H1 (cell line): ENCODE measurements at regions of chr5 and their contacts with region 1.

Region 1: GRCh38 chr5:160082614-160083500 is 36.4 kb downstream of the PWWP2A start:
- DNase-seq: no peak
- H3K4me3 ChIP-seq: no peak overlapping the region
- H3K27ac ChIP-seq: 0 out of 2 replicates have a peak overlapping the region, but pooled peaks have one; percentile 11
- H3K4me1 ChIP-seq: peaks cover 0 to 10% (median 0%) of the 10 kb centered on the region in 4 experiments; a peak in 2 of 7 replicates
- H3K27me3 ChIP-seq: no peaks in the 10 kb centered on the region
- CTCF ChIP-seq: no peak
- EP300 ChIP-seq: no peak
- POLR2A ChIP-seq: no peak
- RAD21 ChIP-seq: no peak

Region 2: DNA sequence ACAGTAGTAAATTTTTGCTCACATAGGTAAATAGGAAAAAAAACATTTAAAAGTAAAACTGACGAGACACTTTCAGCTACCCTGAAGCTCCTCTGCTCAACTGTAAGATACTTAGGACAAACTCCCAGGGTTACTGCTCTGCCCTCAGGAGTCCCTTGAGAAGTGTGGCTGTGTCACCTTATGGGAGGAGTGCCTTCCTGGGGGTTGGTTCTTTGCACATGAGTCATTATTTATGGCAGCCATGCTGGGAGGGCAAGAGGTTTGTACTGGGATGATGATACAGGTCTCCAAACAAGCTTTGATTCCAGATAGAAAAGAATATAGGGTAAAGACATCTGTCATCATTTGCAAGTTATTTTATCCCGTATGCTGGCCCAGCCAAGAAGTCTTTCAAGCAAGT is 28.0 kb before region 1 on chr5:
- CTCF ChIA-PET with region 1: interaction called, 13 read pairs
- POLR2A ChIA-PET with region 1: interaction called, 5 read pairs
- DNase-seq: no peak
- H3K4me3 ChIP-seq: no peak overlapping the region
- H3K27ac ChIP-seq: no peak overlapping the region
- H3K4me1 ChIP-seq: no peaks in the 10 kb centered on the region
- H3K27me3 ChIP-seq: no peaks in the 10 kb centered on the region
- CTCF ChIP-seq: no peak
- EP300 ChIP-seq: no peak
- POLR2A ChIP-seq: no peak
- RAD21 ChIP-seq: no peak

Region 3: DNA sequence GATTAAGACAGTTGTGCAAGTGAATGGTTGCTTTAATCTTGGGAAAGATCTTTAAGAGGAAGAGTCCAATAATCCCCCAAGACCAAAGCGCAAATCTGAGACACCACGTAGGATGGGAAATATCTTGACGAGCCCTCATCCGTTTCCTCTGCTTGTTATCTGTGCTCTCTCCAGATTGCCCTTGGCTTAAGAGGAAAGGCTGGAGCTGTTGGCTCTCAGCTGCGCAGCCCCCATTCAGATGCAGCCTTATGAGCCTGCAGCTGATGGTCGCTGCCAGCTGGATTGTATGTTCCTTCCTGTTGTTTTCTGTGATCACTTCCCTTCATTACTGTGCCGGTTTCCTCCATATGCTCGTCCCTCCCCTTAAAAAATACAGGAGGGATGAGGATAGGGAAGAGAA is 11.3 kb before region 1 on chr5:
- CTCF ChIA-PET with region 1: interaction called, 52 read pairs
- POLR2A ChIA-PET with region 1: interaction called, 9 read pairs
- DNase-seq: no peak
- H3K4me3 ChIP-seq: no peak overlapping the region
- H3K27ac ChIP-seq: no peak overlapping the region
- H3K4me1 ChIP-seq: peaks cover 0 to 4% (median 0%) of the 10 kb centered on the region in 4 experiments; a peak in 3 of 7 replicates
- H3K27me3 ChIP-seq: no peaks in the 10 kb centered on the region
- CTCF ChIP-seq: no peak
- EP300 ChIP-seq: no peak
- POLR2A ChIP-seq: no peak
- RAD21 ChIP-seq: no peak

Region 4: GRCh38 chr5:160092960-160093707 is 10.3 kb after region 1 on chr5:
- CTCF ChIA-PET with region 1: interaction called, 16 read pairs
- POLR2A ChIA-PET with region 1: interaction called, 9 read pairs
- DNase-seq: no peak
- H3K4me3 ChIP-seq: no peak overlapping the region
- H3K27ac ChIP-seq: no peak overlapping the region
- H3K4me1 ChIP-seq: no peaks in the 10 kb centered on the region
- H3K27me3 ChIP-seq: no peaks in the 10 kb centered on the region
- CTCF ChIP-seq: no peak
- EP300 ChIP-seq: no peak
- POLR2A ChIP-seq: no peak
- RAD21 ChIP-seq: no peak

Region 5: GRCh38 chr5:160105686-160106360 is 23.0 kb after region 1 on chr5:
- CTCF ChIA-PET with region 1: interaction called, 11 read pairs
- POLR2A ChIA-PET with region 1: interaction called, 3 read pairs
- DNase-seq: no peak
- H3K4me3 ChIP-seq: no peak overlapping the region
- H3K27ac ChIP-seq: no peak overlapping the region
- H3K4me1 ChIP-seq: no peaks in the 10 kb centered on the region; a peak in 1 of 7 replicates
- H3K27me3 ChIP-seq: no peaks in the 10 kb centered on the region
- CTCF ChIP-seq: no peak
- EP300 ChIP-seq: no peak
- POLR2A ChIP-seq: no peak
- RAD21 ChIP-seq: no peak